Activated T-helper 1 cell treated with anti-CD3 and anti-CD28 coated beads, Interleukin-12 subunit alpha, Interleukin-12 subunit beta, Interleukin-2, Interleukin-4 antibody, amounts not matched to agents 30 ng/mL and 10 ng/mL and 1 ng/mL, durations not matched to agents 14 hours and 24 hours and 36 hours (primary cell): ENCODE measurements at regions of chr1 and their contacts with region 1.

Region 1: DNA sequence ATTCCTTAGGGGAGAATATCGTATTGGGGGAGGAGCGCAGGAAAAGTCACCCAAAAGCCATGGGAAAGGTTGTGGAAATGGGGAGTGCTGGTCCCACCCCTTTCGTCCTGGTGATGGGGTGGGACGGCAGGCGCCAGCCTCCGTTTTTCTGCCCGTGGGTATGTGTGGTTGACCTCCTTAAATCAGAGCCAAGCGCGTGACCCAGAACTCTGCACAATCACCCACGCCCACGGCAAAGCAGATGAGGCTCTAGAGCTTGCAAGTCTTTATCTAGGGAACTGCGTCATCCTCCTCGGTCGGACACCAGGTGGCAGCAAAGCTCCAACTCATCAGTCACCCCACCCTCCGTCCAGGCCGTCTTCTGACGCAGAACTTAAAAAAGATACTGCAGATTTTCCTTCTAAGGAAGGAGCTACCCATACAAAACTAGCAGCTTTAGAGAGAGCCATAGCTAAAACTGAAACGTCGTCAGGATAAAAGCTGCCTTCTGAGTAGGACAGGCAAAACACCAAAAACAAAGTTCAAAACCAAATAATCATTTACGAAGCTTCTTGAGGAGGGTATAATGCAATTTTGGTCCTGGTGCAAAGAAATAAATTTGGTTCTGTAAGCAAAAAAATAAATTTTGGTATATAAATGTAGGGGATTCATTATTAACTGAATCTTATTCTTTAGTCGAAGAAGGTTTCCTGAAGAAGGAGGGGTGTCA is 62.0 kb downstream of the TBX19 start:
- DNase-seq: peak; percentile 79
- H3K4me3 Mint-ChIP-seq: no peak overlapping the region
- H3K27ac Mint-ChIP-seq: peak overlapping the region; percentile 14
- H3K4me1 Mint-ChIP-seq: peaks cover 64% of the 10 kb centered on the region
- H3K27me3 Mint-ChIP-seq: peaks cover 7% of the 10 kb centered on the region

Region 2: DNA sequence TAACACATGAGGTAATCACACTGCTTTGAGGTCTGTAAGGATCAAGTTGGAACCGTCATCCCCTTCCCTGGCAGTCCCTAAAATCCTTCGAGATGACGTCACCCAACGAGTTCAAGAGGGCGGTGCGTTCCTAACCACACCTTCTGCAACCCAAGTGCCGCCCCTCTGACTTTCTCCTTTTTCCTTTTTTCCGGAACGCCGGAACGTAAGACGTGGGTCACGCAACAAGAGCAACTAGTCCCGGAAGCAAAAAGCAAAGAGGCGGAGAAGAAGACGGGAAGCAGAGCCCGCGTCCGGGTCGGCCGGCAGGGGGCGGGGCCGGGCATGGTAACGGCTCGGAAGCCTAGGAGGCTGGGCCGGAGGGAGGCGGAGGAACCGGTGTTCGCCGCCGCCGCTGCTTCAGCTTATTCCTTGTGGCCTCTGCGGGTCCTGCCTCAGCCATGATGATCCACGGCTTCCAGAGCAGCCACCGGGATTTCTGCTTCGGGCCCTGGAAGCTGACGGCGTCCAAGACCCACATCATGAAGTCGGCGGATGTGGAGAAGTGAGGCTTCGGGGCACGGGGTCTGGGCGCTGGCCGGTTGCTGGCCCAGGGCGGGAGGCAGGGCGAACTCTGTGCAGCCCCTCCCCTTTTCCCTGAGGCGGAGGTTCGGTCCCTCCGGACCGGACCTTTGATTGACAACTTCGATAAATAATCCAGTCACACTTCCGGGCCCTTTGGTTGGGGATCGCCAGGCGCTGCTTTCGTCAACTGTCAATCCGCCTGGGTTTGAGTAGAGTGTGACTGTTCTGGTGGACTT is 163.9 kb before region 1 on chr1 and contains the start of gene TIPRL:
- intact Hi-C with region 1: loop called (anchors 2 kb)
- DNase-seq: peak; percentile 95
- H3K4me3 Mint-ChIP-seq: no peak within 1 kb of the TSS
- H3K27ac Mint-ChIP-seq: no peak within 1 kb of the TSS
- H3K4me1 Mint-ChIP-seq: no peaks in the 10 kb centered on the region
- H3K27me3 Mint-ChIP-seq: no peaks in the 10 kb centered on the region
- total RNA-seq, gene TIPRL: 42.8 and 45.7 TPM in 2 replicates

Region 3: DNA sequence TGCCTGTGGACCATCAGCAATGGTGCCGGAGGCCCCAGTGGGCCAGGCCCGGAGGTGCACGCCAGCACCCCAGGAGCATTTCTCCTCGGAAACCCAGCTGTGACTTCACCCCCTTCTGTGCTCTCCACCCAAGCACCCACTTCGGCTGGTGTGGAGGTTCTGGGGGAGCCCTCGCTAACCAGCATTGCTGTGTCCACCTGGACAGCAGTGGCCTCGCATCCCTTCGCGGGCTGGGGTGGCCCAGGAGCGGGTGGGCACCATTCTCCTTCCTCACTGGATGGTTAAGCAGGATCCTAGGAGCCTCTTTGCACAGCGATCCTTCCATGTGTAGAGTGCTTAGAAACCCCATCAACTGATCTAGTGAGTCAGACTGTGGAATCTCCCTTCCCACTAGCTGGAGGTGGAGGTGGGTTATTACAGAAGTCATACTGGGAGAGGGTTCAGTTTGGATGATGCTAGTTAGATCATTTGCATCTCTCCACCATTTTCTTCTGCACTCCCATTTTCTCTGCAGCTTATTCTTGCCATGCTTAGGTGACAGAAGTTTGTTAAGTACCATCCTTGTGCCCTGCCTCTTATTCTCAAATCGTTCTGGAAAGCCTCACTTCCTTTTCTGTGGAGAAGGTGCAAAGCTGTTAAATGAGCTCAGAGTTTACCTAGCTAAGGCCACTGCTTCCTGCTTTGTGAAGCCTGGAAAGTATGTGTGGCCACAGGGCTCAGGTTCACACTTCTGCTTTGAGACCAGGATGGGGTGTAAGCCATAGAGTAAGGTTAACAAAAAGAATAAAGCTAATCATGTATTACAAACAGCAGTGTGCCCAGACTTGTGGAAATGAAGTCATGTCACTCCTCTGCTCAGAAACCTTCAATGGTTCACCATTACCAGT is 29.8 kb before region 1 on chr1:
- intact Hi-C with region 1: no loop called
- DNase-seq: no peak
- H3K4me3 Mint-ChIP-seq: no peak overlapping the region
- H3K27ac Mint-ChIP-seq: peak overlapping the region; percentile 10
- H3K4me1 Mint-ChIP-seq: peaks cover 34% of the 10 kb centered on the region
- H3K27me3 Mint-ChIP-seq: peaks cover 2% of the 10 kb centered on the region

Region 4: GRCh38 chr1:168360151-168361021 is 17.7 kb after region 1 on chr1:
- intact Hi-C with region 1: loop called (anchors 1 kb)
- DNase-seq: peak; percentile 36
- H3K4me3 Mint-ChIP-seq: peak overlapping the region; percentile 12
- H3K27ac Mint-ChIP-seq: peak overlapping the region; percentile 68
- H3K4me1 Mint-ChIP-seq: peaks cover 43% of the 10 kb centered on the region
- H3K27me3 Mint-ChIP-seq: peaks cover 3% of the 10 kb centered on the region

Region 5: GRCh38 chr1:168466092-168466713 is 123.5 kb after region 1 on chr1:
- intact Hi-C with region 1: loop called (anchors 1 kb)
- DNase-seq: peak; percentile 18
- H3K4me3 Mint-ChIP-seq: peak overlapping the region; percentile 30
- H3K27ac Mint-ChIP-seq: peak overlapping the region; percentile 71
- H3K4me1 Mint-ChIP-seq: peaks cover 67% of the 10 kb centered on the region
- H3K27me3 Mint-ChIP-seq: no peaks in the 10 kb centered on the region

Region 6: GRCh38 chr1:169106095-169106920 is 763.6 kb after region 1 on chr1 and contains the start of gene ATP1B1:
- intact Hi-C with region 1: loop called (anchors 10 kb)
- DNase-seq: peak; percentile 81
- H3K4me3 Mint-ChIP-seq: peak within 1 kb of the TSS; percentile 89
- H3K27ac Mint-ChIP-seq: peak within 1 kb of the TSS; percentile 80
- H3K4me1 Mint-ChIP-seq: peaks cover 51% of the 10 kb centered on the region
- H3K27me3 Mint-ChIP-seq: peaks cover 5% of the 10 kb centered on the region
- total RNA-seq, gene ATP1B1: 12.3 TPM in 2 replicates

Region 7: DNA sequence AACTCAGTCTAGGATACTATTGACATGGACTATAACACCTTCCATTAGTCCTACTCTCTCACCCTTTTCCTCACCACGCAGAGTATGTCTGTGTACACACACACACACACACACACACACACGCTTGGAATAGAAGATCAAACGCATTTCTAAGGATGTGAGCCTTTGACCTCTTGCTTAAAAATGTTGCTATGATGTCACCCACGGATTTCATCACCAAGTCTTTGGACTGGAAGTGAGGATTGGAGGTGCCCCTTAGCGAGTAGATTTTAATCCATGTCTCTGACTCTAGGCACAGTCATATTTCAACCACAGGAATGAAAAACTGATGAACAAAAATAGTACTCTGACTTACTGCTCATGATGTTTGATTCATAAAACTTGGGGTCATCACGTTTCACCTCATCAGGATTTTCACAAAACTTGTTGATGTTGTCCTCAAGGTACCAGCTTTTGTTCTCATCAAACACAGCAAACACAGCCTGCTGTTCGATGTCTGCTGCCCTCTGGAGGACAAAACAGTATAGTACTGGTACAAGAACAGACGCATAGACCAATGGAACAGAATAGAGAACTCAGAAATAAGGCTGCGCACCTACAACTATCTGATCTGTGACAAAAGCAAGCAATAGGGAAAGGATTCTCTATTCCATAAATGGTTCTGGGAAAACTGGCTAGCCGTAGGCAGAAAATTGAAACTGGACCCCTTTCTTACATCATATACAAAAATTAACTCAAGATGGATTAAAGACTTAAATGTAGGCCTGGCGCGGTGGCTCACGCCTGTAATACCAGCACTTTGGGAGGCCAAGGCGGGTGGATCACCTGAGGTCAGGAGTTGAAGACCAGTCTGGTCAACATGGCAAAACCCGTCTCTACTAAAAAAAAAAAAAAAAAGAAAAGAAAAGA is 1203.6 kb after region 1 on chr1:
- intact Hi-C with region 1: loop called (anchors 5 kb)
- DNase-seq: peak; percentile 40
- H3K4me3 Mint-ChIP-seq: no peak overlapping the region
- H3K27ac Mint-ChIP-seq: no peak overlapping the region
- H3K4me1 Mint-ChIP-seq: peaks cover 9% of the 10 kb centered on the region
- H3K27me3 Mint-ChIP-seq: no peaks in the 10 kb centered on the region